Activated CD4-positive, alpha-beta memory T cell treated with anti-CD3 and anti-CD28 coated beads for 36 hours (primary cell): ENCODE measurements at regions of chr10 and their contacts with region 1.

Region 1: DNA sequence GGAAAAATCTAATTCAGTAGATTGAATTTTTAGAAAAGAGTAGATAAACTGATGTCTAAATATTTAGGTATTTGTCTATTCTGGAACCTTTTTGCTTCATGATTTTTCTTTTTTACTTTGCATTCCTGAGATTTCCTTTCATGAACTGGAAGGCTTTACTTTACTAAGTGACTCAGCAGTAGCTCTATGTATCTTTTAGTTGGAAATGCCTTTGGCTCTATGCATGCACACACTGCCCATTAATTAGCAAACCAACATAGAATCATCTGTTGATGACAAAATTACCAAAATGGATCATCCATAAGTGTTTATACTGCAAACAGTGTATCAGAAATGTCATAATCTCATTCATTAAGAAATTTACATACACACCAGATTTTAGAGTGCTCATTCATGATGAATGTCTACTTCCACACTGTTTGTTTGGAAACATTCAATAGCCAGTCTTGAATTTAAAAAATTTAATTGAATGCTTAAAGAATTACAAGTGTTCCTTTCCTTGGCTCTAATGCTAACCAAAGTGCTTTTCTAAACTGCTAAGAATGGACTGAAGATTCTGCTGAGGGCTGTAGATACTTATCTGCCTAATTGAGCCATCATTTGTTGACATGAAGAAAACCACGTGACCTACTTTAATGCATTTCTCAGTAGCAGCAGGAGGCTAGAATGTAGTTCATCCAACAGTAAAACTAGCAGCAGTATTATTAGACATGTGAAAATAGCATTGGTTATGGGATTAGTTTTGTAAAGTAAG is 282.0 kb downstream of the ADK start:
- DNase-seq: no peak
- H3K4me3 Mint-ChIP-seq: no peak overlapping the region
- H3K27ac Mint-ChIP-seq: no peak overlapping the region
- H3K4me1 Mint-ChIP-seq: peaks cover 1% of the 10 kb centered on the region
- H3K27me3 Mint-ChIP-seq: no peaks in the 10 kb centered on the region

Region 2: GRCh38 chr10:74419958-74420375 is 13.1 kb before region 1 on chr10:
- CTCF ChIA-PET with region 1: interaction called, 11 read pairs
- POLR2A ChIA-PET with region 1: interaction called, 4 read pairs
- intact Hi-C with region 1: no loop called
- DNase-seq: peak; percentile 14
- H3K4me3 Mint-ChIP-seq: no peak overlapping the region
- H3K27ac Mint-ChIP-seq: no peak overlapping the region
- H3K4me1 Mint-ChIP-seq: no peaks in the 10 kb centered on the region
- H3K27me3 Mint-ChIP-seq: no peaks in the 10 kb centered on the region